ENCODE measurements at regions of chr2 and their contacts with region 1.

Region 1: DNA sequence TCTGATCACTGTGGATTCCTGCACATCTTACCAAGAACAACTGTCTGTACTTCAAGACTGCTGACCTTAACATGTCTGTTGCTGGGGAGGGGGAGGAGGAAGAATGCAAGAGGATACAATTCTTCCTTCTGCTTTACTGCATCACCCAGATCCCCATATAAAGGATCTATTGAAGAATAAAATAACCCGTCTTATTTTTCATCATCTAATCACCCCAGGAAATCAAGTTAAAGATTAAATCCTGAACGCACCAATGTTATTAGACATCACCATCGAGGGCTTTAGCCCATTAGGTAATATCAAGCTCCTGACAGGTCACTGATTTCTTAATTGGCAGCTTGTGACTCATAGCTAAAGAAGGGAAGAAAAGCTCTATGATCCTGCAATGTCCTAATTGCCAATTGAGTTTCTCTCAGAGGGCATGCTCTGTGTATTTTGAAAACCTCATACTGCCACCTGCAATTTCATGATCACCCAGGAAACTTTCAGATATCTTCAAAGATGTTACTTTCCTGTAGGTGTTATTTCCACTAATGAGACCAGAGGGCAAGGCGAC is 75.4 kb upstream of the KCNE4 start:
- DNase-seq: no peak
- ATAC-seq: no peak
- H3K4me3 ChIP-seq: no peak overlapping the region
- H3K27ac ChIP-seq: no peak overlapping the region
- H3K4me1 ChIP-seq: no peaks in the 10 kb centered on the region
- H3K27me3 ChIP-seq: no peaks in the 10 kb centered on the region
- CTCF ChIP-seq: no peak

Region 2: GRCh38 chr2:222854773-222855700 is 121.6 kb before region 1 on chr2:
- intact Hi-C with region 1: no loop called
- DNase-seq: no peak
- ATAC-seq: no peak
- H3K4me3 ChIP-seq: no peak overlapping the region
- H3K27ac ChIP-seq: no peak overlapping the region
- H3K4me1 ChIP-seq: peaks cover 7% of the 10 kb centered on the region
- H3K27me3 ChIP-seq: no peaks in the 10 kb centered on the region
- CTCF ChIP-seq: no peak

Region 3: GRCh38 chr2:223051693-223052289 is 75.2 kb after region 1 on chr2 and contains the start of gene KCNE4:
- intact Hi-C with region 1: loop called in 1 of 2 experiments (anchors 5 kb)
- DNase-seq: peak in 1 of 2 donors; percentile 16
- ATAC-seq: peak in 2 of 4 donors; percentile 7 to 33
- H3K4me3 ChIP-seq: peak within 1 kb of the TSS; percentile 59
- H3K27ac ChIP-seq: peak within 1 kb of the TSS; percentile 72
- H3K4me1 ChIP-seq: no peaks in the 10 kb centered on the region
- H3K27me3 ChIP-seq: peaks cover 0 to 7% (median 3%) of the 10 kb centered on the region in 3 donors
- CTCF ChIP-seq: no peak
- total RNA-seq, gene KCNE4: 0.34 to 1.7 (median 0.79) TPM